ENCODE measurements at regions of chr14 and their contacts with region 1.

Region 1: GRCh38 chr14:34539407-34540180 is at the start of gene EAPP:
- DNase-seq: peak; percentile 98
- ATAC-seq: peak; percentile 97 to 100 (median 99)
- H3K4me3 ChIP-seq: peak within 1 kb of the TSS; percentile 74 to 97 (median 89)
- H3K27ac ChIP-seq: peak within 1 kb of the TSS; percentile 74 to 99 (median 93)
- H3K4me1 ChIP-seq: peaks cover 8 to 28% (median 18%) of the 10 kb centered on the region in 9 donors
- H3K27me3 ChIP-seq: no peaks in the 10 kb centered on the region
- CTCF ChIP-seq: peak in 1 of 9 donors; percentile 11
- total RNA-seq, gene EAPP: 16.4 to 24.5 (median 20.1) TPM

Region 2: GRCh38 chr14:34331728-34332623 is 207.6 kb before region 1 on chr14:
- intact Hi-C with region 1: loop called in 1 of 10 experiments (anchors 10 kb)
- DNase-seq: peak; percentile 43 to 48
- ATAC-seq: peak; percentile 67 to 85 (median 76)
- H3K4me3 ChIP-seq: no peak overlapping the region
- H3K27ac ChIP-seq: no peak overlapping the region
- H3K4me1 ChIP-seq: peaks cover 0 to 19% (median 0%) of the 10 kb centered on the region in 9 donors
- H3K27me3 ChIP-seq: no peaks in the 10 kb centered on the region
- CTCF ChIP-seq: peak; percentile 67 to 83 (median 77)

Region 3: GRCh38 chr14:34461334-34462131 is 78.1 kb before region 1 on chr14:
- intact Hi-C with region 1: loop called in 4 of 10 experiments (anchors 5 to 10 kb)
- DNase-seq: peak; percentile 47 to 48
- ATAC-seq: peak; percentile 21 to 58 (median 48)
- H3K4me3 ChIP-seq: peak overlapping the region; percentile 51 to 83 (median 68)
- H3K27ac ChIP-seq: peak overlapping the region; percentile 32 to 94 (median 90)
- H3K4me1 ChIP-seq: peaks cover 0 to 38% (median 18%) of the 10 kb centered on the region in 9 donors
- H3K27me3 ChIP-seq: no peaks in the 10 kb centered on the region
- CTCF ChIP-seq: no peak

Region 4: DNA sequence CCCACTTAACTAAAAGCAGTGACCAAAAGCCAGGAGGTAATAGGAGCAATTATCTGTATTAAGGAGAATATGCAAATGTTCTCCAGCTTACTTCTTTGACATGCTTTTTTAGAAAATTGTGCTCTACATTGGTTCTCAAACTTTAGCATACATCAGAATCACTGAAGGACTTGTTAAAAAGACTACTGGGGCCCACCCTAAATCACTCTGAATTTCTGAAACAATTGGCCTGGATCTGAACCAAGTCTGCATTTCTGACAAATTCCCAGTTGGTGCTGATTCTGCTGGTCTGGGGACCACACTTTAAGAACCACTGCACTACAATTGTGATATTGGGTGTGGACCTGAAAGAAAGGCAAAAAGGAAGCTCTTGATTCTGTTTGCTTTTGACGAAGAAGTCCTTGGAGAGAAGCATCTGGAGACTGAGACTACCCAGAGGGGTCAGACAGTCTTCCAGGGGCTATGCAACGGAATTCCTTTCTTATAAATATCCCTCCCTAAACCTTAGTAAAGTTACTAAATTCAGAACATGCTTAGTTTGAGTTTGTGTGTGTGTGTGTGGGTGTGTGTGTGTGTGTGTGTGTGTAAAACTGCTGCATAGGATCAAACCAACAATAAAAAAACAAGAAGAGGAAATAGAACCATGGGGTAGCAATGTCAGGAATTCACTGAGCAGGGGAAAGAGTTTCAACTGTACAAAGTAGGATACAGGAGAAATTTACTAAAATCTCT is 36.9 kb before region 1 on chr14:
- intact Hi-C with region 1: loop called in 1 of 10 experiments (anchors 5 kb)
- DNase-seq: no peak
- ATAC-seq: peak in 1 of 8 donors; percentile 28
- H3K4me3 ChIP-seq: no peak overlapping the region
- H3K27ac ChIP-seq: peak overlapping the region in 2 of 10 donors; percentile 12 to 47
- H3K4me1 ChIP-seq: peaks cover 0 to 13% (median 4%) of the 10 kb centered on the region in 9 donors
- H3K27me3 ChIP-seq: no peaks in the 10 kb centered on the region
- CTCF ChIP-seq: no peak